Activated CD8-positive, alpha-beta memory T cell treated with anti-CD3 and anti-CD28 coated beads, Interleukin-2, amount 10 ng/mL, durations not matched to agents 7 days and 5 days (primary cell): ENCODE measurements at regions of chr9 and their contacts with region 1.

Region 1: GRCh38 chr9:121545875-121546423 is 46.3 kb upstream of the GGTA1 start:
- DNase-seq: peak; percentile 83
- ATAC-seq: peak; percentile 93
- H3K4me3 Mint-ChIP-seq: no peak overlapping the region
- H3K27ac Mint-ChIP-seq: no peak overlapping the region
- H3K4me1 Mint-ChIP-seq: peaks cover under 1% of the 10 kb centered on the region
- H3K27me3 Mint-ChIP-seq: peaks cover 20% of the 10 kb centered on the region

Region 2: DNA sequence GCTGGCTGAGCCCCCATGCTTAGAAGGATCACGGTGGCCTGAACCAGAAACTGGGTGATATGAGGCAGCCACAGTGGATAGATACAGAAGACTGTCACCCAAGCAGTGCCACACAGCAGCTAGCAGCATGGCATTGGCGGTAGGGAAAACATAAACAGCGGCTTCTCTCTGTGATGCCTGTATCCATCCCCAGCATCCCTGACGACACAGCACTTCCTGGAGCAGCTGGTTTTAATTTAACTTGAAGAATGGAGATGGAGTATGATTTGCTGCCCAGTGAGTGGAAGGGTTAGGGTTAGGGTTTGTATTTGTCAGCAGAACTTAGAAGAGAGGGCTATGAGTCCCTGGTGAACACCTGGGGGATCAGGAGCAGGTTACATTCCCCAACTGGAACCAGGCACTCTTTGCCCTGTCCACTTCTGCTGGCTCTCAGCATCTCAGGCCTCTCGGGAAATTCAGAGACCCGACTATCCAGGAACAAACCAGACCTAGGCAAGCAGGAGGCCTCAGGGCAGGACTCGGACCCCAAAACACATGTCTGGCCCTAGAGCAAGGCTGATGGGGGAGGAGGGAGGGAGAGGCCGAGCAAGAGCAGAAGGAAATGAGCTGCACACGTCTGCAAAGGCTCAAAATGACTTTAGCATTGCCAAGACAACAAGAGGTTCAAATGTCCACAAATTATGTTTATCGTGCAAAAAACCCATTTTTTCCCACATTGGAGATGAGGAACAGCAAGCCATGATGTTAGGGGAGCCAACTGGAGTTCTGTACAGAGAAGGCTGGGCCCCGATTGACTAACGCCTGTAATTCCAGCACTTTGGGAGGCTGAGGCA is 39.8 kb before region 1 on chr9:
- CTCF ChIA-PET with region 1: no interaction called
- DNase-seq: no peak
- ATAC-seq: no peak
- H3K4me3 Mint-ChIP-seq: no peak overlapping the region
- H3K27ac Mint-ChIP-seq: no peak overlapping the region
- H3K4me1 Mint-ChIP-seq: peaks cover 7% of the 10 kb centered on the region
- H3K27me3 Mint-ChIP-seq: peaks cover 37% of the 10 kb centered on the region

Region 3: GRCh38 chr9:121557581-121558447 is 11.9 kb after region 1 on chr9:
- CTCF ChIA-PET with region 1: interaction called, 26 read pairs
- DNase-seq: peak; percentile 67
- ATAC-seq: peak; percentile 69
- H3K4me3 Mint-ChIP-seq: no peak overlapping the region
- H3K27ac Mint-ChIP-seq: no peak overlapping the region
- H3K4me1 Mint-ChIP-seq: peaks cover 17% of the 10 kb centered on the region
- H3K27me3 Mint-ChIP-seq: peaks cover 12% of the 10 kb centered on the region

Region 4: GRCh38 chr9:121686930-121687541 is 141.1 kb after region 1 on chr9:
- CTCF ChIA-PET with region 1: interaction called, 28 read pairs
- DNase-seq: peak; percentile 83
- ATAC-seq: peak; percentile 90
- H3K4me3 Mint-ChIP-seq: no peak overlapping the region
- H3K27ac Mint-ChIP-seq: no peak overlapping the region
- H3K4me1 Mint-ChIP-seq: no peaks in the 10 kb centered on the region
- H3K27me3 Mint-ChIP-seq: peaks cover 6% of the 10 kb centered on the region

Region 5: DNA sequence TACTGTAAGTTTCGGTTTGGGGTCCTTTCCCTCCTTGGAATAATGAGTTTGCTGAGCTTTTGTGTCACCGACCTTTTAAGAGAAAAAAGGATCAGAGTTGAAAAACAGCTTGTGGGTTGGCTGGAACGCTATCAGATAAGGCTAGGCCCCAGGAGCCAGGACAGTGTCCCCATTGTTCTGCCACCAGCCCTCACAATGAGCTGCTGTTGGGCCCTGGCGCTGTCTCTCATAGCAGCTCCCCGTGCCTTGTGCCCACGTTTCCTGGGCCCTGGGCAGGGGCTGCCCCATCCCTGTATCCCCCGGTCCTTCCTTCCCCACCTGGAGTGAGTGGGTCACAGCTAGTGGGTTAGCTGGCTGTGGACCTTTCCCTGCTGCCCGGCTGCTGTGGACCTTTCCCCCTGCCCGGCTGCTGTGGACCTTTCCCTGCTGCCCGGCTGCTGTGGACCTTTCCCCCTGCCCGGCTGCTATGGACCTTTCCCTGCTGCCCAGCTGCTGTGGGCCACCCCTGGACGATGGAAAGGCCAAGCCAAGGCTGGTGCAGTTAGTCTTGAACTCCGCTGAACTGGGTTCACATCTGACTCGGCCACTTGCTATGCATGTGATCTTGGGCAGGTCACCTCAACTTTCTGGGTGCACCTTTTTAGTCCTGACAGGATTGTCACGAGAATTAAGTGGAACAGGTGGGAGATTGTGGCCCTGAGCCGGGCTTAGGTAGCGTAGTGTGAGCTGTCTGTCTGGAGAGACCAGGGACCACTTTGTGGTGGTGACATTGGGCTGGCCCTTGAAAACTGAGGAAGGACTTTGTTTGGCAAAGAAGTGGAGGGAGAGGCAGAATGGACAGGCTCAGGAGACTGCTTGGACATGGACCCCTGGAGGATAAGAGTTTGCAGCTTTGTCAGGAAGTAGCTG is 205.0 kb after region 1 on chr9:
- CTCF ChIA-PET with region 1: no interaction called
- DNase-seq: no peak
- ATAC-seq: no peak
- H3K4me3 Mint-ChIP-seq: no peak overlapping the region
- H3K27ac Mint-ChIP-seq: no peak overlapping the region
- H3K4me1 Mint-ChIP-seq: peaks cover 15% of the 10 kb centered on the region
- H3K27me3 Mint-ChIP-seq: no peaks in the 10 kb centered on the region